ENCODE measurements at regions of chr7 and their contacts with region 1.

Region 1: DNA sequence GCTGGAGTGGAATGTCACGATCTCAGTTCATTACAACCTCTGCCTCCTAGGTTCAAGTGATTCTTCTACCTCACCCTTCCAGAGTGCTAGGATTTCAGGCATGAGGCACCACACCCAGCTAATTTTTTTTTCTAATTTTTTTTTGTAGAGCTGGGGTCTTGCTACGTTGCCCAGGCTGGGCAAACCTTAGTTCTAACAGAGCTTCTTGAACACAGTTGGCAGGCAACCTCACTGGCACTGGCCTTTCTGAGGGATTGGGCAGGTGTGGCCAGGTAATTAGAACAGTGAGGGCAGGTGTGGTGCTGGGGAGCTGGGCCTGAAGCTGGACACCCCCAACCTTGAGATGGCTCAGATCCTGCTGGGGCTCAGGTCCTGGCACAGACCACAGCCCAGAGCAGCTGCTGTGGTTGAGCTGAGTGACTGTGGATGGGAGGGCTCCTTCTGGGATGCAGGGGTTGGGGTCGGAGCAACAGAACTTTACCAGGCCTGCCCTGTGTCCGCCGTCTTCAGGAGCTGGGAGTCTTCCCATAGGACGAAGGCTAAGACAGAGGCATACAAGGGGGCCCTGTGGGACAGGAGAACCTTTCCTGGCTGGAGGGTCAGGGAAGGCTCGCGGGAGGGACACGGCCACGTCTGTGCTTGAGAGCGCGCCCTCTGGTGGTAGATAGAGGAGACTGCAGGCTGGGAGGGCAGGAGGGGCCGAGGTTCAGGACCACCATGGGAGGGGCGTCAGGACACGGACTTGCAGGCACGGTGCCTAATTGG is 48.2 kb downstream of the COL26A1 start:
- DNase-seq: peak; percentile 47
- ATAC-seq: peak; percentile 60
- H3K4me3 Mint-ChIP-seq: no peak overlapping the region
- H3K27ac Mint-ChIP-seq: no peak overlapping the region
- H3K4me1 Mint-ChIP-seq: peaks cover 11% of the 10 kb centered on the region
- H3K27me3 Mint-ChIP-seq: peaks cover 6% of the 10 kb centered on the region

Region 2: GRCh38 chr7:101390901-101391301 is 20.0 kb before region 1 on chr7:
- CTCF ChIA-PET with region 1: interaction called, 10 read pairs
- DNase-seq: peak; percentile 81
- ATAC-seq: peak; percentile 88
- H3K4me3 Mint-ChIP-seq: no peak overlapping the region
- H3K27ac Mint-ChIP-seq: peak overlapping the region; percentile 71
- H3K4me1 Mint-ChIP-seq: peaks cover 25% of the 10 kb centered on the region
- H3K27me3 Mint-ChIP-seq: peaks cover 20% of the 10 kb centered on the region

Region 3: GRCh38 chr7:101575168-101575567 is 164.2 kb after region 1 on chr7:
- CTCF ChIA-PET with region 1: no interaction called
- DNase-seq: no peak
- ATAC-seq: no peak
- H3K4me3 Mint-ChIP-seq: no peak overlapping the region
- H3K27ac Mint-ChIP-seq: no peak overlapping the region
- H3K4me1 Mint-ChIP-seq: no peaks in the 10 kb centered on the region
- H3K27me3 Mint-ChIP-seq: peaks cover 27% of the 10 kb centered on the region